ENCODE measurements at regions of chr2 and their contacts with region 1.

Region 1: DNA sequence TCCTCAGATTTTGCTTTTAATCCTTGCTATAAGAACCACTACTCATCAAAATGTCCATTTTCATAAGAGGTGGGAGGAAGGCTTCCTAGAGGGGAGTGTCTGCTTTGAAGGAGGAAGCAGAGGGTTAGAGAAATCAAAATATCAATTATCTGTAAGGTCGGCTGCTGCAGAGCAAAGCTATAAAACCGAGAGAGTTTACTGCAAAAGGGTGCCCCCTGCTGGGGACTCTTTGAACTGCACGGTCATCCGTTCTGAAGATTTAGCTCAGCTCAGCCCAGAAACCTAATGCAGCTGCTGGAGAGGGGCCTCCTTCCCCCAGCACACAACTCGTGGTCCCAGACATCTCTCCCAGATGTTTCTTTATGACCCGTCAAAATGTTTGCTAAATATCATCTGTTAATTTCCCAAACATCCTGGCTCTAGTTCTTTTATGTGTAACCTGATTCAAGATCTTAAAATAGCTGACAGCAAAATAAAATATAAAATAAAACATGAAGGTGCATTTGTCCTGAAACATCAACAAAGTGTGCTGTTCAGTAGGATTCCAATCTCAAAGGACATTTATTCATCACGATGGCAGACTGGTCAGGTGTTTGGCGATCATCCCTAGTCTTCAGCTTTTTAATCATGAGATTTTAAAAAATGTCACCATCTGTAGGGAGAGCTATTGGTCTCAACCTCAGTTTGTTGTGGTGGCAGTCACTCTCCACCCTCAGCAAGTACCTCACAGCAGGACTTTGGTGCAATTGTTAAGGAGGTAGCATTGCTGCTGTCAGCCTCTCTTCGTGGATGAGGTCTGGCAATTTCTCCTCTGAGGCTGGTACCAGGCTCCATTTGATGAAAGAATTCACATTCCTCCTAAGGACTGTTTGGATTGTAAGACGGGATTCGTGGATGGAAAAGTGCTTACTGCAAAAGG is 185.9 kb downstream of the MTX2 start:
- DNase-seq: peak; percentile 94
- ATAC-seq: peak; percentile 71
- H3K4me3 Mint-ChIP-seq: no peak overlapping the region
- H3K27ac Mint-ChIP-seq: no peak overlapping the region
- H3K4me1 Mint-ChIP-seq: peaks cover 22% of the 10 kb centered on the region
- H3K27me3 Mint-ChIP-seq: peaks cover 12% of the 10 kb centered on the region
- CTCF ChIP-seq: peak; percentile 97

Region 2: DNA sequence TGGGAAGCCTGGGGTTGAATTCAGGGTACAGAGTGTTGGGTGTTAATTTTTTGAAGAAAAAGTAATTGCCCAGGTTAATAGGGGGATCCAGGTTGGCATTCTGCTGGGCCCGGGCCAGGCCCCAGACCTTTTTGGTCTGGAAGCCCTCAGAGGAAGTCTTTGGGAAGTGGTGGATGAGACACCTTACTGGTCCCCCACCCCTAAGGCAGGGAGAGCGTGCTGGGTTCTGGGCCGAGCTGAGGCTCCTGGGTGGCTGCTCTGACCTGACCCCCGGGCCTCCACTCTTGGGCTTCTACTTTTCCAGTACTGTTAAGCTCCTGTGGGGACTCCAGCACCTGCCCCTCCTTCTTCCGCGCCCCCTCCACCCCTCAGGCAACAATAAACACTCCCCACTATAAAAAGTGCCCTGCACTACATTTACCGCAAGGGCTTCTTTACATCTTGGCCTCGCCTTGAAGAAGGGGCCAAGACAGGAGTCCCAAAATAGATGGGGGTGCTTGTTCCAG is 298.8 kb before region 1 on chr2:
- CTCF ChIA-PET with region 1: interaction called, 13 read pairs
- POLR2A ChIA-PET with region 1: no interaction called
- DNase-seq: no peak
- ATAC-seq: no peak
- H3K4me3 Mint-ChIP-seq: no peak overlapping the region
- H3K27ac Mint-ChIP-seq: no peak overlapping the region
- H3K4me1 Mint-ChIP-seq: peaks cover 33% of the 10 kb centered on the region
- H3K27me3 Mint-ChIP-seq: peaks cover 100% of the 10 kb centered on the region
- CTCF ChIP-seq: no peak

Region 3: GRCh38 chr2:176269319-176270099 is 185.6 kb before region 1 on chr2 and contains the start of gene MTX2:
- CTCF ChIA-PET with region 1: interaction called, 11 read pairs
- POLR2A ChIA-PET with region 1: interaction called, 4 read pairs
- DNase-seq: peak; percentile 82
- ATAC-seq: peak; percentile 95
- H3K4me3 Mint-ChIP-seq: peak within 1 kb of the TSS; percentile 95
- H3K27ac Mint-ChIP-seq: peak within 1 kb of the TSS; percentile 91
- H3K4me1 Mint-ChIP-seq: peaks cover 13% of the 10 kb centered on the region
- H3K27me3 Mint-ChIP-seq: peaks cover 4% of the 10 kb centered on the region
- CTCF ChIP-seq: no peak
- total RNA-seq, gene MTX2: 33.6 to 40.5 TPM (median 37.5 TPM) in 3 replicates

Region 4: GRCh38 chr2:176491172-176491904 is 36.2 kb after region 1 on chr2:
- CTCF ChIA-PET with region 1: interaction called, 18 read pairs
- POLR2A ChIA-PET with region 1: no interaction called
- DNase-seq: no peak
- ATAC-seq: no peak
- H3K4me3 Mint-ChIP-seq: no peak overlapping the region
- H3K27ac Mint-ChIP-seq: no peak overlapping the region
- H3K4me1 Mint-ChIP-seq: peaks cover 24% of the 10 kb centered on the region
- H3K27me3 Mint-ChIP-seq: peaks cover 47% of the 10 kb centered on the region
- CTCF ChIP-seq: no peak

Region 5: GRCh38 chr2:176638167-176639015 is 183.2 kb after region 1 on chr2:
- CTCF ChIA-PET with region 1: interaction called, 22 read pairs
- POLR2A ChIA-PET with region 1: no interaction called
- DNase-seq: peak; percentile 59
- ATAC-seq: peak; percentile 70
- H3K4me3 Mint-ChIP-seq: peak overlapping the region; percentile 69
- H3K27ac Mint-ChIP-seq: no peak overlapping the region
- H3K4me1 Mint-ChIP-seq: peaks cover 20% of the 10 kb centered on the region
- H3K27me3 Mint-ChIP-seq: peaks cover 94% of the 10 kb centered on the region
- CTCF ChIP-seq: peak; percentile 73